Gastrocnemius medialis (tissue), 4 donors: ENCODE measurements at regions of chr13 and their contacts with region 1.

Region 1: GRCh38 chr13:113393563-113394338 is 29.8 kb upstream of the GRTP1 start:
- DNase-seq: peak in 1 of 2 donors; percentile 75
- ATAC-seq: peak; percentile 60 to 82
- H3K4me3 ChIP-seq: peak overlapping the region; percentile 61 to 71 (median 66)
- H3K27ac ChIP-seq: peak overlapping the region; percentile 41 to 66 (median 58)
- H3K4me1 ChIP-seq: peaks cover 0 to 13% of the 10 kb centered on the region in 2 donors
- H3K27me3 ChIP-seq: no peaks in the 10 kb centered on the region
- CTCF ChIP-seq: peak; percentile 67 to 99 (median 97)
- POLR2A ChIP-seq: peak in 1 of 2 donors; percentile 22

Region 2: DNA sequence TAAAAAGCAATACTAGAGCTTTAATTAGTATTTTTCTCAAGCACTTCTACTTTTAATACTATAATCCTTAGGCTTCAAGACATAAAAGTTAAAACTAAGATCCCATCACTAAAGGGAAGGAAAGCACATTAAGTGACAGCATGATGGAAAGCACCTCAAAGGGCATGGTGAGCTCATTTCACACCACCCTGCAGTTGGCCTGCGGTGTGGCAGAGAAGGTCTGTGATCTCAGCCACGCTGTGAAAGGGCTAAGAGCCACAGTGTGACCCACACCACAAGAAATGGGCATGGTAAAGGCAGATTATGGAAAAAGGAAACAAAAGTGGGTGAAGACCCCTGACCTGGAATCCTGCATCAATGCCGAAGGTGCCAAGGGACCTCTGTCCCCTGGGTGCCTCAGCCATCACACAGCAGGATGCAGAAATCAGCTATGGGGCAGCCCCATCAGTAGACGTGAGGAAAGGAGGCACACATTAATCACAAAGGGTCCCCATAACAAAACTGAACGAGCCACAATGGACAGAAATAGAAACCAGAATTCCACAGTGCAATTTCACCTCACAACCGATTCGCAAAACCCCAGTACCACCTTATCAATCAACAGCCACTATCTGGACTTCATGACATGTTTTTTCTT is 839.4 kb before region 1 on chr13:
- in situ Hi-C with region 1: no loop called
- intact Hi-C with region 1: no loop called
- DNase-seq: no peak
- ATAC-seq: no peak
- H3K4me3 ChIP-seq: no peak overlapping the region
- H3K27ac ChIP-seq: no peak overlapping the region
- H3K4me1 ChIP-seq: no peaks in the 10 kb centered on the region
- H3K27me3 ChIP-seq: no peaks in the 10 kb centered on the region
- CTCF ChIP-seq: no peak
- POLR2A ChIP-seq: no peak

Region 3: DNA sequence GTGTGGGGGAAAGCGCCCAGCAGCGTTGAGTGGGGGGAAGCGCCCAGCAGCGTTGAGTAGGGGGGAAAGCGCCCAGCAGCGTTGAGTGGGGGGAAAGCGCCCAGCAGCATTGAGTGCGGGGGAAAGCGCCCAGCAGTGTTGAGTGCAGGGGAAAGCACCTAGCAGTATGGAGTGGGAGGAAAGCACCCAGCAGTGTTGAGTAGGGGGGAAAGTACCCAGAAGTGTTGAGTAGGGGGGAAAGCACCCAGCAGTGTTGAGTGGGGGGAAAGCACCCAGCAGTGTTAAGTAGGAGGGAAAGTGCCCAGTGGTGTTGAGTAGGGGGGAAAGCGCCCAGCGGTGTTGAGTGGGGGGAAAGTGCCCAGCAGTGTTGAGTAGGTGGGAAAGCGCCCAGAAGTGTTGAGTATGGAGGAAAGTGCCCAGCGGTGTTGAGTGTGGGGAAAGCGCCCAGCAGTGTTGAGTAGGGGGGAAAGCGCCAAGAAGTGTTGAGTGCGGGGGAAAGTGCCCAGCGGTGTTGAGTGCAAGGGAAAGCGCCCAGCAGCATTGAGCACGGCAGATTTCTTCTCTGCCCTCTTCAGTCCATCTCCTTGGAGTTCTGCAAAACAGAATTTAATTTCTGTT is 565.6 kb before region 1 on chr13:
- in situ Hi-C with region 1: no loop called
- intact Hi-C with region 1: no loop called
- DNase-seq: no peak
- ATAC-seq: no peak
- H3K4me3 ChIP-seq: no peak overlapping the region
- H3K27ac ChIP-seq: no peak overlapping the region
- H3K4me1 ChIP-seq: no peaks in the 10 kb centered on the region
- H3K27me3 ChIP-seq: no peaks in the 10 kb centered on the region
- CTCF ChIP-seq: no peak
- POLR2A ChIP-seq: no peak

Region 4: GRCh38 chr13:112942689-112943308 is 451.0 kb before region 1 on chr13:
- in situ Hi-C with region 1: loop called in 3 of 4 experiments (anchors 10 to 25 kb)
- intact Hi-C with region 1: loop called (anchors 2 kb)
- DNase-seq: peak; percentile 82 to 89
- ATAC-seq: peak; percentile 95 to 97
- H3K4me3 ChIP-seq: peak overlapping the region; percentile 49 to 62 (median 52)
- H3K27ac ChIP-seq: peak overlapping the region in 2 of 4 donors; percentile 36 to 69
- H3K4me1 ChIP-seq: peaks cover 3 to 7% of the 10 kb centered on the region in 2 donors
- H3K27me3 ChIP-seq: peaks cover 0 to 16% (median 9%) of the 10 kb centered on the region in 3 donors
- CTCF ChIP-seq: peak; percentile 69 to 96 (median 82)
- POLR2A ChIP-seq: no peak

Region 5: DNA sequence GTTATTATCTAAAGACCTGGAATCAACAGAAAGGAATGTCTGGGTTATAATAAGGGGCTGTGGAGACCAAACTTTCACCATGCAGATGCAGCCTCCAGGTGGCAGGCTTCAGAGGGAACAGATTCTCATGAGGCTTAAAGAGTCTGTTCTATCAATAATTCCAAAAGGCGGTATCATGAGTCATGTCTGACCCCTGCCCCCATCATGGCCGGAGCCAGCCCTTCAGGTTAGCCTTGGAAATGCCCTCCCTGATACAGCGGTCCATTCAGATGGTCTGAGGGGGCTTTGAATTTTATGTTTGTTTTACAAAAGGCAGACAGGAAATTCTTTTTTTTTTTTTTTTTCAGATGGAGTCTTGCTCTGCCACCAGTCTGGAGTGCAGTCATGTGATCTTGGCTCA is 118.4 kb before region 1 on chr13:
- in situ Hi-C with region 1: loop called (anchors 10 to 25 kb)
- intact Hi-C with region 1: loop called (anchors 2 kb)
- DNase-seq: peak in 1 of 2 donors; percentile 37
- ATAC-seq: peak; percentile 40 to 71
- H3K4me3 ChIP-seq: no peak overlapping the region
- H3K27ac ChIP-seq: no peak overlapping the region
- H3K4me1 ChIP-seq: peaks cover 0 to 7% of the 10 kb centered on the region in 2 donors
- H3K27me3 ChIP-seq: no peaks in the 10 kb centered on the region
- CTCF ChIP-seq: peak; percentile 50 to 65 (median 59)
- POLR2A ChIP-seq: no peak

Region 6: GRCh38 chr13:113327766-113328471 is 65.8 kb before region 1 on chr13:
- in situ Hi-C with region 1: no loop called
- intact Hi-C with region 1: loop called (anchors 5 kb)
- DNase-seq: peak in 1 of 2 donors; percentile 31
- ATAC-seq: peak; percentile 84 to 85
- H3K4me3 ChIP-seq: peak overlapping the region in 1 of 4 donors; percentile 35
- H3K27ac ChIP-seq: peak overlapping the region; percentile 87 to 92 (median 88)
- H3K4me1 ChIP-seq: peaks cover 11 to 18% of the 10 kb centered on the region in 2 donors
- H3K27me3 ChIP-seq: no peaks in the 10 kb centered on the region
- CTCF ChIP-seq: peak in 1 of 5 experiments; percentile 12
- POLR2A ChIP-seq: no peak

Region 7: DNA sequence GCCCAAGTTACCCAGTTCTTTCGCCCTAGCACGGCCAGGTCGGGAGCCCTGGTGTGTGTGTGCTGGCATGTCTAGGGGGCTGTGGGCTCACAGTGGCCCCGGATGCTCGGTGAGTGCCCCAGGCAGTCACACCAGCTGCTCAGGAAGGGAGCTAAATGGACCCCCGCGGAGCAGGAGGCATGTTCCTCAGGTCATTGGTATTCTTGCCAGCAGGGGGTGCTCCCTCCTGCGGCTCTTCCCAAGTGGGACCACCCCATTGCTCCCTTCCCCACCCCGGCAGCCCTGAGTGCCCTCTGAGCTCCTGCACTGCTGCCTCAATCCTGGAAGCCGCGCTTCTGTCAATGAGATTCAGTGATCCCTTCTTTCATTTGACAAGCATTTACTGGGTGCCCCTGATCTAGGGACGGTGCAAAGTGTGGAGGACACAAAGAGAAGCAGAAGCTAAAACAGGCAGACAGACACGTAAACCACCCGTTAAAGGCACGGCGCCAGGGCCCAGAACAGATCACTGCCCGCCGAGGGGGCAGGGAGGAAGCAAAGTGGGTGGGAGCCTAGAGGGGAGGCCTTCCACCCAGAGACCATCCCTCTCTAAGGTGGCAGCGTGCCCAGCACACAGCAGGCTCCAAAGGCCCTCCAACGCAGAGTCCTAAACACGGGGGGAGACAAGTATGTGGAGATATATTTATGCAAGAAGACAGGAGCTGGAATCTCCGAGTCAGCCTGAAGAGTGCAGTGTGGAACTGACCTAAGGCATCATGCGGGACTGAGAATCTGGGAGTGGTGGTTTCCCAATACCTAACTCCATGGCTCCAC is 64.7 kb after region 1 on chr13:
- in situ Hi-C with region 1: no loop called
- intact Hi-C with region 1: loop called (anchors 10 kb)
- DNase-seq: no peak
- ATAC-seq: no peak
- H3K4me3 ChIP-seq: no peak overlapping the region
- H3K27ac ChIP-seq: no peak overlapping the region
- H3K4me1 ChIP-seq: peaks cover 5 to 12% of the 10 kb centered on the region in 2 donors
- H3K27me3 ChIP-seq: no peaks in the 10 kb centered on the region
- CTCF ChIP-seq: peak in 1 of 5 experiments; percentile 33
- POLR2A ChIP-seq: no peak